Activated CD4-positive, alpha-beta memory T cell treated with anti-CD3 and anti-CD28 coated beads for 36 hours (primary cell): ENCODE measurements at regions of chr14 and their contacts with region 1.

Region 1: GRCh38 chr14:54566410-54567223 is at the start of gene SAMD4A:
- DNase-seq: peak; percentile 72
- H3K4me3 Mint-ChIP-seq: peak within 1 kb of the TSS; percentile 91
- H3K27ac Mint-ChIP-seq: peak within 1 kb of the TSS; percentile 72
- H3K4me1 Mint-ChIP-seq: peaks cover 27% of the 10 kb centered on the region
- H3K27me3 Mint-ChIP-seq: peaks cover 7% of the 10 kb centered on the region
- total RNA-seq, gene SAMD4A: 2.4 to 2.6 TPM

Region 2: DNA sequence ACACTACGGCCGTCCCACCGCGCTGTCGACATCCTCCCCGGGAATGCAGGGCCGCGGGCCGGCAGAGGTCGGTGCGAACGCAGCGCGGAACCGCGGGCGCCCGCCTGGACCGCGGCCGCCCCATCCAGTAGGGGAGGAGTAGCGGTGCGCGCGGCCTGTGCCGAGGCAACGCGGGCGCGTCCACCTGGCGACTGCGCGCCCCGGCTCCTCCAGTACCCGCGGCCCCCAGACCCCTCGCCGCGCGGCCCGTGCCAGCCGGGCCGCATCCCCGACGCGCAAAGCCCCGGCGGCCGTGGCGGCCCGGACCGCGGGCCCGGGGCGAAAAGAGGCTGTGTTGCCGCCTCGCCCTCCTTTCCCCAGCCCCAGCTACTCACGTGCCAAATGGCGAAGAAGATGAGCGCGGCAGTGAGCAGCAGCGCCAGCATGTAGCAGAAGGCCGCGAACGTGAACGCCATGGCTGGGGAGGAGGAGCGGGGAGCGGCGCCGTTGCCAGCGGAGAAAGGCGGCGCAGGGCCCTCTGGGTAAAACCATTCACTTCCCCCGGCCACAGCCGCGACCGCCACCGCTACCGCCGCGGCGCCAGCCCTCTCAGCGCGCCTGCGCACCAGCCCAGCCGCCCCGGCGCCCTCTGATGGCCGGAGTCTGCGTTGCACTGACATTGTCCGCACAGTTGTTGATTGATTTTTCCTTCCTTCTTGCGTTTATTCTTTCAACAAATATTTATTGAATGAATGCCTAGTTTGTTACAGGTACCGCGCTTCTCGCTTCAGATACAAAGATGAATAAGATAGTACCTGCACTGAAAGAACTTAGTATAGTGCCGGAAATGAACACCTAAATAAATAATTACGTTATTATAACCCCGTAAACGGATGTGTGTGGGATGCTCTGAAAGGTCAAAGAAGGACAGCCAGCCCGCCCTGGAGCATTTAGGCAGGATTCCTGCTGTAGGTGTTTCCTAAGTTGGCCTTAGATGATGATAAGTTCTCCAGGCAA is 125.4 kb before region 1 on chr14 and contains the start of gene CNIH1:
- CTCF ChIA-PET with region 1: no interaction called
- POLR2A ChIA-PET with region 1: no interaction called
- intact Hi-C with region 1: loop called (anchors 2 kb)
- DNase-seq: peak; percentile 95
- H3K4me3 Mint-ChIP-seq: peak within 1 kb of the TSS; percentile 88
- H3K27ac Mint-ChIP-seq: peak within 1 kb of the TSS; percentile 93
- H3K4me1 Mint-ChIP-seq: peaks cover 50% of the 10 kb centered on the region
- H3K27me3 Mint-ChIP-seq: no peaks in the 10 kb centered on the region
- total RNA-seq, gene CNIH1: 84.2 to 89.9 TPM

Region 3: GRCh38 chr14:54451961-54452360 is 114.7 kb before region 1 on chr14:
- CTCF ChIA-PET with region 1: no interaction called
- POLR2A ChIA-PET with region 1: no interaction called
- intact Hi-C with region 1: no loop called
- DNase-seq: no peak
- H3K4me3 Mint-ChIP-seq: no peak overlapping the region
- H3K27ac Mint-ChIP-seq: no peak overlapping the region
- H3K4me1 Mint-ChIP-seq: peaks cover 4% of the 10 kb centered on the region
- H3K27me3 Mint-ChIP-seq: peaks cover 2% of the 10 kb centered on the region

Region 4: GRCh38 chr14:54529811-54530210 is 36.8 kb before region 1 on chr14:
- CTCF ChIA-PET with region 1: no interaction called
- POLR2A ChIA-PET with region 1: no interaction called
- intact Hi-C with region 1: no loop called
- DNase-seq: no peak
- H3K4me3 Mint-ChIP-seq: no peak overlapping the region
- H3K27ac Mint-ChIP-seq: no peak overlapping the region
- H3K4me1 Mint-ChIP-seq: peaks cover 2% of the 10 kb centered on the region
- H3K27me3 Mint-ChIP-seq: no peaks in the 10 kb centered on the region

Region 5: GRCh38 chr14:54627540-54628363 is 61.1 kb after region 1 on chr14:
- CTCF ChIA-PET with region 1: interaction called, 3 read pairs
- POLR2A ChIA-PET with region 1: interaction called, 3 read pairs
- intact Hi-C with region 1: loop called (anchors 2 kb)
- DNase-seq: peak; percentile 49
- H3K4me3 Mint-ChIP-seq: peak overlapping the region; percentile 55
- H3K27ac Mint-ChIP-seq: peak overlapping the region; percentile 78
- H3K4me1 Mint-ChIP-seq: peaks cover 40% of the 10 kb centered on the region
- H3K27me3 Mint-ChIP-seq: no peaks in the 10 kb centered on the region

Region 6: GRCh38 chr14:54691525-54692283 is 125.1 kb after region 1 on chr14:
- CTCF ChIA-PET with region 1: interaction called, 31 read pairs
- POLR2A ChIA-PET with region 1: no interaction called
- intact Hi-C with region 1: loop called (anchors 1 kb)
- DNase-seq: peak; percentile 75
- H3K4me3 Mint-ChIP-seq: no peak overlapping the region
- H3K27ac Mint-ChIP-seq: no peak overlapping the region
- H3K4me1 Mint-ChIP-seq: peaks cover 15% of the 10 kb centered on the region
- H3K27me3 Mint-ChIP-seq: peaks cover 8% of the 10 kb centered on the region

Region 7: GRCh38 chr14:54792288-54792687 is 225.7 kb after region 1 on chr14:
- CTCF ChIA-PET with region 1: interaction called, 5 read pairs
- POLR2A ChIA-PET with region 1: no interaction called
- intact Hi-C with region 1: loop called (anchors 5 kb)
- DNase-seq: no peak
- H3K4me3 Mint-ChIP-seq: no peak overlapping the region
- H3K27ac Mint-ChIP-seq: no peak overlapping the region
- H3K4me1 Mint-ChIP-seq: no peaks in the 10 kb centered on the region
- H3K27me3 Mint-ChIP-seq: no peaks in the 10 kb centered on the region

Region 8: DNA sequence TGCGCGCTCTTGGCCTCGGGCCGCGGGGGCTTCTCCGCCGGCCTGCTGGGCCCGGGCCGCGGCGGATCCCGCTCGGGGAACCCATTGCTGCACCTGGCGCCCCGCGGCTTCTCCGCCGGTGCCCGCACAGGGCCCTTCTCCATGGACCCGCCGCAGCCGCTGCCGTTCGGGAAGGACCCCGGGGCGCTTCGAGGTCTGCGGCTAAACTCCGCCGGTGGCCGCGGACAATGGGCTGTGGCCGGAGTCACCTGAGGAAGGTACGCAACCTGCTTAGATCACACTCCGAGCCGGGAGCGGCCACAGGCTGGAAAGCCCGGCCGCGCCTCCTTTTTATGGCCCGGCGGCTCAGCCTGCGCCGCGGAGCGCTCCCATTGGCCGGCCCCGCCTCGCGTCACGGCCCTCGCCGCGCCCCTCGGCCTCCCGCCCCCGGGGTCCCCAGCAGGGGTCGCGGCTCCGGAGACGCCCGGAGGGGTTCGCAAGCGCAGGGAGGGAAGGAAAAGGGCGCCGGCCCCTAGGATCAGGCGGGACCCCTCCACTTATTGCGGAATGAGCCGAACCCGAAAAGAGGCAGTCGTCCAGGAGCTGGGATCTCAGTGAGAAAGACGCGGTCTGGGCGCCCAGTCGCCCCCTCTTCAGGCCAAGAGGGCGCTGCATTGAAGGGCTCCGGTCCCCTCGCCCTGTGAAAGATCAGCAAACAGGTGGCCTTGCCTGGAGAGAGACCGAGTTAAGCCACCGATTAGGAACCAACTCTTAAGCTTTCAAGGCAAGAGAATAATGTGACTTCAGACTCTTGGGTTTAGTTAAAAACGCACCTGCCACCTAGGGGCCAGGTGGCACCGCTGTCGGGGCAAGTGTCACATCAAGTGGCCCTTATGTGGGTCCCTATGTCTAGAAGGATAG is 336.2 kb after region 1 on chr14 and contains the start of gene GCH1:
- CTCF ChIA-PET with region 1: interaction called, 3 read pairs
- POLR2A ChIA-PET with region 1: no interaction called
- intact Hi-C with region 1: loop called (anchors 2 kb)
- DNase-seq: peak; percentile 78
- H3K4me3 Mint-ChIP-seq: peak within 1 kb of the TSS; percentile 87
- H3K27ac Mint-ChIP-seq: peak within 1 kb of the TSS; percentile 87
- H3K4me1 Mint-ChIP-seq: peaks cover 26% of the 10 kb centered on the region
- H3K27me3 Mint-ChIP-seq: no peaks in the 10 kb centered on the region
- total RNA-seq, gene GCH1: 40.8 to 42.3 TPM